Panc1 (cell line): ENCODE measurements at regions of chr3 and their contacts with region 1.

Region 1: GRCh38 chr3:24530471-24530870 is 35.8 kb upstream of the THRB start:
- DNase-seq: no peak
- ATAC-seq: no peak
- H3K4me3 ChIP-seq: no peak overlapping the region
- H3K27ac ChIP-seq: no peak overlapping the region
- H3K4me1 ChIP-seq: no peaks in the 10 kb centered on the region
- H3K27me3 ChIP-seq: no peaks in the 10 kb centered on the region
- CTCF ChIP-seq: no peak

Region 2: GRCh38 chr3:24595788-24596187 is 65.3 kb after region 1 on chr3:
- CTCF ChIA-PET with region 1: no interaction called
- POLR2A ChIA-PET with region 1: no interaction called
- in situ Hi-C with region 1: no loop called
- intact Hi-C with region 1: loop called (anchors 2 kb)
- DNase-seq: no peak
- ATAC-seq: no peak
- H3K4me3 ChIP-seq: no peak overlapping the region
- H3K27ac ChIP-seq: no peak overlapping the region
- H3K4me1 ChIP-seq: no peaks in the 10 kb centered on the region
- H3K27me3 ChIP-seq: no peaks in the 10 kb centered on the region
- CTCF ChIP-seq: no peak